ENCODE measurements at regions of chr17 and their contacts with region 1.

Region 1: GRCh38 chr17:49434821-49435670 is 20.4 kb upstream of the PHB1 start:
- DNase-seq: peak; percentile 73 to 95
- ATAC-seq: peak; percentile 72 to 91
- H3K4me3 ChIP-seq: no peak overlapping the region
- H3K27ac ChIP-seq: no peak overlapping the region
- H3K4me1 ChIP-seq: no peaks in the 10 kb centered on the region
- CTCF ChIP-seq: peak; percentile 83
- EP300 ChIP-seq: no peak
- POLR2A ChIP-seq: no peak
- RAD21 ChIP-seq: peak; percentile 80 to 82

Region 2: DNA sequence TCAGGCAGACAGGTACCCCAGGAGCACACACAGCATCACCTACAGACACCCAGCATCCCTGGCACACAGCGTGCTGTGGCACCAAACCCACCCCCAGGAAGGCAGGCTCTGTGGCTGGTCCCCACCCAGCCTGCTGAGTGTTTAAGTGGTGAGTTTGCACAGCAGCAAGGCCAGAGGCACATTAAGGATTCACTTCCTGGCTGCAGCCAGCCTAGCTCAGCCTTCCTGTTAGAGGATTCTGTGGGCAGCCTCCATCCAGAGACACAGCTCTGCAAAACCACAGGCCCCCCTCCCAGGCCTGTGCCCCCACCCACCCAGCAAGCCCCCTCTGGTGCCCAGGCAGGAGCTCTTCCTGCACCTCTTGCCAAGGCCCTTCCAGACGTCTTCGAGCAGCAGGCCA is 15.7 kb after region 1 on chr17:
- CTCF ChIA-PET with region 1: interaction called, 32 read pairs
- POLR2A ChIA-PET with region 1: no interaction called
- DNase-seq: no peak
- ATAC-seq: peak in 1 of 2 experiments; percentile 23; a peak in 3 of 6 replicates
- H3K4me3 ChIP-seq: no peak overlapping the region
- H3K27ac ChIP-seq: no peak overlapping the region
- H3K4me1 ChIP-seq: peaks cover 4% of the 10 kb centered on the region; the same call in 2 of the 3 replicates
- CTCF ChIP-seq: no peak
- EP300 ChIP-seq: no peak
- POLR2A ChIP-seq: no peak
- RAD21 ChIP-seq: no peak

Region 3: GRCh38 chr17:49465331-49465903 is 30.4 kb after region 1 on chr17:
- CTCF ChIA-PET with region 1: interaction called, 20 read pairs
- POLR2A ChIA-PET with region 1: no interaction called
- DNase-seq: no peak
- ATAC-seq: no peak
- H3K4me3 ChIP-seq: no peak overlapping the region
- H3K27ac ChIP-seq: no peak overlapping the region
- H3K4me1 ChIP-seq: no peaks in the 10 kb centered on the region
- CTCF ChIP-seq: no peak
- EP300 ChIP-seq: no peak
- POLR2A ChIP-seq: no peak
- RAD21 ChIP-seq: no peak

Region 4: DNA sequence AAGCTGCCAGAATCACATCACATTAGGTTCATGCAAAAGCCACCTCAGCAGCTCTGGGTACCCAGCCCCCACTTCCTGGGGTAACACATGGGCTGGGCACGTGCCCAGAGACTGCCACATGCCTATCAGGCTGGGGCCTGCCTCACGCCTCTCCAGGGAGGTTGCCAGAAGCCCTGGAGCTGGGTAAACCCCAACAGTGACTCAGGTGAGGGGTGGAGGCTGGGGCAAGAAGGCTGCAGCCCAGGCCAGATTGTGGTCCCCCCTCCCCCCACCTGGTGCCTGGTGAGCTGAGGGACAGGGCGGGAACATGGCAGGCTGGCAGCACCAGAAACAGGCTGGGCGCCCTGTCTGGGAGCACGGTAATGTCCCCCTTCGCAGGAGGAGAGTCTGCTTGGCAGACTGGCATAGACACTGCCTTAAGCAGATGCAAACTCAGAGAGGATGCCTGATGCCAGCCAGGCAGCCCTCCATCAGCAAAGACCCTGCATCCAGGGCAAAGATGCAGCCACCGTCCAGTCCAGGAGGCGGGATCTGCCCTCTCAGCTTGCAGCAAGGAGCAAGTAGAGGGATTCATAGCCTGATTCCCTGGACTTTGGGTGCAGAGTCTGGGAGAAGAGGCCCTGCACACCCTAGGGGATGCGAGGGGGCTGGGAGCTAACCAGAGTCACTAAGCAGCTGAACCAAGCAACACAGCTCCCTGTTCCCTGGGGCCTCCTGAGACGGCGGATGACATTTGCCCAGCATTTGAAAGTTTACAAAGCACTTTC is 88.8 kb after region 1 on chr17:
- CTCF ChIA-PET with region 1: interaction called, 13 read pairs
- POLR2A ChIA-PET with region 1: no interaction called
- DNase-seq: no peak
- ATAC-seq: no peak
- H3K4me3 ChIP-seq: no peak overlapping the region
- H3K27ac ChIP-seq: no peak overlapping the region
- H3K4me1 ChIP-seq: no peaks in the 10 kb centered on the region
- CTCF ChIP-seq: no peak
- EP300 ChIP-seq: no peak
- POLR2A ChIP-seq: no peak
- RAD21 ChIP-seq: no peak